ENCODE measurements at regions of chr12 and their contacts with region 1.

Region 1: GRCh38 chr12:6383572-6384498 is at the start of gene LTBR:
- DNase-seq: peak; percentile 97
- ATAC-seq: peak; percentile 91
- H3K4me3 ChIP-seq: peak within 1 kb of the TSS; percentile 70 to 98 (median 85)
- H3K27ac ChIP-seq: peak within 1 kb of the TSS; percentile 88 to 99 (median 95)
- H3K4me1 ChIP-seq: peaks cover 21 to 28% of the 10 kb centered on the region in 2 donors
- H3K27me3 ChIP-seq: no peaks in the 10 kb centered on the region
- CTCF ChIP-seq: peak; percentile 3 to 43 (median 23)
- POLR2A ChIP-seq: peak; percentile 75 to 79
- total RNA-seq, gene LTBR: 40.2 to 98.6 (median 43.7) TPM

Region 2: DNA sequence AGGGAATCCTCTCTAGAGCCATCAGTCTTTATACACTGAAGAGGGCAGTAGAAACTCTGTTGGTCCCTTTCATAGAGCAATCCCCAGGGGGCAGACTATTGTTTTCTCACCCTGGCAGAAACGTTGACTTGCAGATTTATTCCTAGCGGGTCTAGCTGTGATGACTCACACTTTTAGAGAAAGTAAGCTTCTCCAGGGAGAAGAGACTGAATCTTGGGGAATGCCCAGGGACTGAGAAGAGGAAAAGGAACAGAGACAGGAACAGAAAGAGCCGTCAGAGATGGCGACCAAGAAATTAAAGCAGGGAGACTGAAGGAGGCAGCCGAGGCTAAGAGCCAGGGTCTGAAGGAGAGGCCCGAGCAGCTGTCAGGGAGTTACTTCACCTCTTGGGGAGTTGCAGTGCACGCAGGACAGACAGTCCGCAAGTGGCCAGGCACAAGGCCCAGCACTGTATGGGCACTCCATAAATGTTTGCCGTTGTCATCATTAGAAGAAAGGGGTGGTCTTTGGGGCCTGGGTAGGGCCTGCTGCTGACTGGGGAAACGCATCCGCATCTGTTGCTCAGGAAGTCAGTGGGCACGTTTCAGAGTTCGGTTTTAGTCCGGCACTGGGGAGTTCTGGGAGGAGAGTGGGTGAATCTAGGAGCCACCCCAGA is 60.4 kb before region 1 on chr12:
- in situ Hi-C with region 1: loop called in 1 of 4 experiments (anchors 10 kb)
- intact Hi-C with region 1: loop called (anchors 1 kb)
- DNase-seq: peak; percentile 70 to 86
- ATAC-seq: peak; percentile 77 to 78
- H3K4me3 ChIP-seq: peak overlapping the region; percentile 4 to 27 (median 12)
- H3K27ac ChIP-seq: peak overlapping the region; percentile 70 to 85 (median 81)
- H3K4me1 ChIP-seq: peaks cover 57 to 58% of the 10 kb centered on the region in 2 donors
- H3K27me3 ChIP-seq: no peaks in the 10 kb centered on the region
- CTCF ChIP-seq: peak; percentile 30 to 45 (median 40)
- POLR2A ChIP-seq: no peak

Region 3: DNA sequence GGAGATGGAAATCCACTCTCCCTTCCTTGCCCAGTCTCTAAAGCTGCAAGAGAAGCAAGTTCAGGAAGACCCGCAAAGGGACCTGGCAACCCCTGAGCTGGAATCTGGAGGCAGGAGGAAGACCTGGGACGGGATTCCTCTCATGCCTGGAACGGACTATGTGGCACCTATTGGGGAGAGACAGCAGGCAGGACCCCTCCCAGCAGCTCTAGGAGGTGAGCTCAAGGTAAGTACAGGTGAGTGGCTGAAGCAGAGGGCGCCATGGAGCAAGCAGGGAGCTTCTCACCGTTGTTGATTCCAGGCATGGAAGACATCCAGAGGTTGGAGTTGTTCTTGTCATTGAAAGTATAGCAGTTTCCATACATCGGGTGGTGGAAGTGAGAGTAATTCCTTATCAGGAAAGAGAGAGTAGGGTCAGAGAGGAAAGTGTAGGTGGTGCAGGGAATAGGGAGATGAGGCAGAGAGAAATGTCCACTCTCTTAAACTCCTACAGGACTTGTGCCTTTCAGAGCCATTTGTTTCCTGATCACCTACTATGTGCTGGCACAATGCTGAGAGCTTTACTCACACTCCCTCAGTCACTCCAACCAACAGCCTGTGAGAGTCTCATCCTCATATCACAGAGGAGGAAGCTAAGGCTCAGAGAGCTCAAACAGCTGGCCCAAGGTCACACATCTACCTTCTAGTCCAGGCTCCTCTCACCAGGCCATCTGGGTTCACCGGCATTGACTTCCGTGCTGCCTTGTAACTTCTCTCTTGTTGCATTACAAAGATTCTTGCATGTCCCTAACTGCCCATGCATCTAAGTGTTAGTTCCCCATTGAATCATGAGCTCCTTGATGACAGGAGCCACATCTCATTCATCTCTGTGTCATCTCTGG is 28.1 kb before region 1 on chr12:
- in situ Hi-C with region 1: no loop called
- intact Hi-C with region 1: loop called (anchors 1 kb)
- DNase-seq: no peak
- ATAC-seq: no peak
- H3K4me3 ChIP-seq: no peak overlapping the region
- H3K27ac ChIP-seq: no peak overlapping the region
- H3K4me1 ChIP-seq: peaks cover 23% of the 10 kb centered on the region in 2 donors
- H3K27me3 ChIP-seq: no peaks in the 10 kb centered on the region
- CTCF ChIP-seq: no peak
- POLR2A ChIP-seq: no peak